ENCODE measurements at regions of chr5 and their contacts with region 1.

Region 1: GRCh38 chr5:129018837-129019236 is 53.5 kb downstream of the SLC27A6 start:
- DNase-seq: no peak
- H3K4me3 ChIP-seq: no peak overlapping the region
- H3K27ac ChIP-seq: no peak overlapping the region
- H3K4me1 ChIP-seq: no peaks in the 10 kb centered on the region
- H3K27me3 ChIP-seq: no peaks in the 10 kb centered on the region
- CTCF ChIP-seq: no peak
- EP300 ChIP-seq: no peak
- POLR2A ChIP-seq: no peak

Region 2: GRCh38 chr5:128962211-128962610 is 56.6 kb before region 1 on chr5:
- intact Hi-C with region 1: loop called in 1 of 4 experiments (anchors 5 kb)
- DNase-seq: no peak
- H3K4me3 ChIP-seq: no peak overlapping the region
- H3K27ac ChIP-seq: no peak overlapping the region
- H3K4me1 ChIP-seq: no peaks in the 10 kb centered on the region
- H3K27me3 ChIP-seq: no peaks in the 10 kb centered on the region
- CTCF ChIP-seq: no peak
- EP300 ChIP-seq: no peak
- POLR2A ChIP-seq: no peak

Region 3: GRCh38 chr5:128988476-128988875 is 30.4 kb before region 1 on chr5:
- intact Hi-C with region 1: loop called in 1 of 4 experiments (anchors 1 kb)
- DNase-seq: no peak
- H3K4me3 ChIP-seq: no peak overlapping the region
- H3K27ac ChIP-seq: no peak overlapping the region
- H3K4me1 ChIP-seq: peaks cover 2% of the 10 kb centered on the region
- H3K27me3 ChIP-seq: no peaks in the 10 kb centered on the region
- CTCF ChIP-seq: no peak
- EP300 ChIP-seq: no peak
- POLR2A ChIP-seq: no peak

Measured in ovary (tissue), 10 donors.